ENCODE measurements at regions of chr12 and their contacts with region 1.

Region 1: GRCh38 chr12:100234598-100235304 is 32.1 kb downstream of the DEPDC4 start:
- DNase-seq: peak; percentile 58
- H3K4me3 ChIP-seq: no peak overlapping the region
- H3K27ac ChIP-seq: no peak overlapping the region
- H3K4me1 ChIP-seq: no peaks in the 10 kb centered on the region
- H3K27me3 ChIP-seq: no peaks in the 10 kb centered on the region
- CTCF ChIP-seq: peak; percentile 52 to 53
- POLR2A ChIP-seq: no peak

Region 2: DNA sequence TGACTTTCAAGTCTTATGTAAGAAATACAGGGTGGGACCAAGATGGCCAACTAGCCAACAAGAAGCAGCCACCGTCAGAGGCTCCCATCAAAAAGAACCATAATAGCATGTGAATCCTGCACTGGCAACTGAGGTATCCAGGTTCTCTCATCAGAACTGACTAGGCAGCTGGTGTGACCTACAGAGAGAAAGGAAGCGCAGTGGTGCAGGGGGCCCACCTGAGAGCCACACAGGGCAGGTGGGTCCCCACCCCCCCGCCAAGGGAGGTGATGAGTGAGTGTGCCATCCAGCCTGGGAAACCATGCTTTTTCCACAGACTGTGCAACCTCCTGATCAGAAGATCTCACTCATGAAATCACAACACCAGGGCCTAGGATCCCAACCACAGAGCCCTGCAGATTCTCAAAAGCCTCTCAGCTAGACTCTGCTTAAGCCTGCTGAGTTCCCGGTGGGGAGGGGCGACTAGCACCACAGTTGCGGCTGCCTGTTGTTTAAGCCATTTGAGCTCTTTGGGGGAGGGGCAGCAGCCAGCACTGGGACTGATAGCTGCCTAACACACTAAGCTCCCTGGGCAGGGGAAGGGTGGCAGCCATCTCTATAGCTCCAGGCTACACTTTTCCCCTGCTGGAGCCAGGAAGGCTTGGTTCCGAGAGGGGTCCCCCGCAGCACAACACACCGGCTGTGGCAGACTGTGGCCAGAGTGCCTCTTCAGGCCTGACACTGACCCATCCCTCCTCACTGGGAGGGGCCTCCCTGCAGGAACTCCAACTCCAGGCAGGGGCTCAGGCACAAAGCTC is 511.9 kb before region 1 on chr12:
- CTCF ChIA-PET with region 1: no interaction called
- POLR2A ChIA-PET with region 1: no interaction called
- dilution Hi-C with region 1: no loop called
- intact Hi-C with region 1: no loop called
- DNase-seq: no peak
- H3K4me3 ChIP-seq: no peak overlapping the region
- H3K27ac ChIP-seq: no peak overlapping the region
- H3K4me1 ChIP-seq: no peaks in the 10 kb centered on the region
- H3K27me3 ChIP-seq: no peaks in the 10 kb centered on the region
- CTCF ChIP-seq: no peak
- POLR2A ChIP-seq: no peak

Region 3: DNA sequence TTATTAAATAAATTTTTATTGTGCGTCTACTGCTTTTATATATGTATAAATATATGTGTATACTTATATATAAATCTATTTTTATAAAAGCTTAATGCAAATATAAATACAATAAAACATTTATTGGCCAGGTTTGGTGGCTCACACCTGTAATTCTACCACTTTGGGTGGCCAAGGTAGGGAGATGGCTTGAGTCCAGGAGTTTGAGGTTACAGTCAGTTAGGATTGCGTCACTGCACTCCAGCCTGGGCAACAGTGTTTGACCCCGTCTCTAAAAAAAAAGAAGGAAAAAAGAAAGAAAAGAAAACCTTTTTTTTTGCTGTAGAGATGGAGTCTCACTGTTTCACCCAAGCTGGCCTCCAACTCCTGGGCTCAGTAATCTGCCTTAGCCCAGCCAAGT is 13.2 kb before region 1 on chr12:
- CTCF ChIA-PET with region 1: interaction called, 11 read pairs
- POLR2A ChIA-PET with region 1: no interaction called
- dilution Hi-C with region 1: no loop called
- intact Hi-C with region 1: no loop called
- DNase-seq: no peak
- H3K4me3 ChIP-seq: no peak overlapping the region
- H3K27ac ChIP-seq: no peak overlapping the region
- H3K4me1 ChIP-seq: no peaks in the 10 kb centered on the region
- H3K27me3 ChIP-seq: no peaks in the 10 kb centered on the region
- CTCF ChIP-seq: no peak
- POLR2A ChIP-seq: no peak